Cardiac septum (tissue), 1 donor: ENCODE measurements at regions of chr2 and their contacts with region 1.

Region 1: GRCh38 chr2:197399887-197400540 is 34.8 kb downstream of the SF3B1 start:
- DNase-seq: no peak

Region 2: GRCh38 chr2:196783431-196784094 is 616.5 kb before region 1 on chr2:
- intact Hi-C with region 1: loop called (anchors 10 kb)
- DNase-seq: no peak

Region 3: DNA sequence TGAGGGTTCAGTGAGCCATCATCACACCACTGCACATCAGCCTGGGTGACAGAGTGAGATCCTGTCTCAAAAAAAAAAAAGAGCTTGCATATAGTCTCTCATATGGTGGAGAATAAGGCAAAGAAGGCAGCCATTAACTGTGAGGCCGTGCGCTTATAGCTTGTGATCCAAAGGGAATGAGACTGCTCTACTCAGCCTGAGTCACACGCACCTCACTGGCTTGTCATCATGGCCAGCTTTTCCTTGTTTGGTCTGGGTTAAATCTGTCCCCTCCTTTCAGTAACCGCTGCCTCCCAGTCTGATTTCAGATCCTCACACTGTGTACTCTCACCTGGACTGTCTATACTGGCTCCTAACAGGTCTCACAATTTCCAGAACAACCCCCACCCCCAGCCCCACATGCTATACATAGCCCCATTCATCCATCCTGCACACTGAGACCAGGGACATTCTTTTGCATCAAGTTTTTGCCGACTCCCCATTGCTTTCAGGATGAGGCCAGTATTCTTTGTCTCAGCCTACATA is 54.1 kb before region 1 on chr2:
- intact Hi-C with region 1: no loop called
- DNase-seq: no peak